ENCODE measurements at regions of chr16 and their contacts with region 1.

Region 1: GRCh38 chr16:28202147-28202746 is 9.5 kb downstream of the XPO6 start:
- DNase-seq: no peak
- ATAC-seq: peak; percentile 62
- H3K4me3 Mint-ChIP-seq: peak overlapping the region; percentile 2
- H3K27ac Mint-ChIP-seq: peak overlapping the region; percentile 41
- H3K4me1 Mint-ChIP-seq: peaks cover 19% of the 10 kb centered on the region
- H3K27me3 Mint-ChIP-seq: no peaks in the 10 kb centered on the region
- CTCF ChIP-seq: no peak

Region 2: DNA sequence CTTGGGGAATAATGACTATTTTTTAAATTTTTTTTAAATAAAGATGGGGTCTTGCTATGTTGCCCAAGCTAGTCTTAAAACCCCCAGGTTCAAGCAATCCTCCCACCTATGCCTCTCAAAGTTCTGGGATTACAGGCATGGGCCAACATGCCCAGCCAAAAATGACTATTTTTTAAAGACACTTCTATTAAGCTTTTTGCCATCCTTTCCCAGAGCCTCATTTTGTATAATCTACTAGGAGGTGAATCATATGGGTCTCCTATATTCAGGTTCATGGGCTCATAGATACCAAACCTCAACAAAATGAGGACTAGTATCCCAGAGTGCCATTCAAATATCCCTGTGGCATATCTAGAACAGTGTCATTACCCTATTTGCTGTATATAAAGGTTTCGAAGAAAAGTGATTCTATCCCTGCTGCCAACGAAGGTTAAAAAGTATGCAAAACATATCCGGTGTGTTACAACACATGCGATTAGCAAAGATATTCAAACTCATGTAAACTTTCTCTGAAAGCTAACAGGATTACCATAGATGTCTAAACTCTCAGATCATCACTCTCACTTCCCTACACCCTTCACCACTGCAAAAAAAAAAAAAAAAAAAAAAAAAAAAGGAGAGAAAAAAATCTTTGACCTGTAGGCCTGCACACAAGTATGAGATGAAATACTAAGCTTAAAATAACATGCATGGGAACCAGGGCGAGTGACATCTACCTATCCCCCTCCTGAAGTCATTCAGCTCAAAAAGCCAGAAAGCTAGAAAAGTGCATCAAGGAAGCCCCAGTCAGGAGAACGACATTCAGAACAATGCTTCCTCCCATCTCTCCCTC is 13.9 kb before region 1 on chr16:
- CTCF ChIA-PET with region 1: interaction called, 3 read pairs
- POLR2A ChIA-PET with region 1: interaction called, 16 read pairs
- intact Hi-C with region 1: no loop called
- DNase-seq: no peak
- ATAC-seq: peak; percentile 63
- H3K4me3 Mint-ChIP-seq: peak overlapping the region; percentile 75
- H3K27ac Mint-ChIP-seq: peak overlapping the region; percentile 91
- H3K4me1 Mint-ChIP-seq: peaks cover 93% of the 10 kb centered on the region
- H3K27me3 Mint-ChIP-seq: no peaks in the 10 kb centered on the region
- CTCF ChIP-seq: no peak

Region 3: DNA sequence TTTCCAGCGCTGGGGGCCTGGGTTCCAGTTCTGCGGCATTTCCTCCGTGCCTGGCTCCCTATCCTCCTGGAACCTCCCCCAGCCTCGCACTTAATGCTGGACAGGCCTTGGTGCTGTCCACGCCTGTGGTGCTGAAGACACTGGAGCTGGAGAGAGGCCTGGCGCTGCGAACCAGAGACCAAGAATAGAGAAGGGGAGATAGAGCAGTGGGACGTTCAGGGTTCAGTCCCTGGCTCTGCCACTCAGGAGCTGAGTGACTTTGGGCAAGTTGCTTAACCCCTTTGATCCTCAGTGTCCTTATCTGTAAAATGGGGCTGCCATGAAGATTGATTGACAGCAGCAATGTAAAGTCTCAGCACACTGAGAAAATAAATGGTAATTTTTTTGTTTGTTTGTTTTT is 102.0 kb after region 1 on chr16:
- CTCF ChIA-PET with region 1: no interaction called
- POLR2A ChIA-PET with region 1: no interaction called
- intact Hi-C with region 1: no loop called
- DNase-seq: no peak
- ATAC-seq: no peak
- H3K4me3 Mint-ChIP-seq: no peak overlapping the region
- H3K27ac Mint-ChIP-seq: no peak overlapping the region
- H3K4me1 Mint-ChIP-seq: peaks cover 2% of the 10 kb centered on the region
- H3K27me3 Mint-ChIP-seq: no peaks in the 10 kb centered on the region
- CTCF ChIP-seq: no peak